Left cardiac atrium (tissue), 4 donors: ENCODE measurements at regions of chr1 and their contacts with region 1.

Region 1: GRCh38 chr1:33219881-33220661 is 36.2 kb upstream of the ZNF362 start:
- DNase-seq: no peak
- ATAC-seq: peak in 1 of 2 donors; percentile 45

Region 2: DNA sequence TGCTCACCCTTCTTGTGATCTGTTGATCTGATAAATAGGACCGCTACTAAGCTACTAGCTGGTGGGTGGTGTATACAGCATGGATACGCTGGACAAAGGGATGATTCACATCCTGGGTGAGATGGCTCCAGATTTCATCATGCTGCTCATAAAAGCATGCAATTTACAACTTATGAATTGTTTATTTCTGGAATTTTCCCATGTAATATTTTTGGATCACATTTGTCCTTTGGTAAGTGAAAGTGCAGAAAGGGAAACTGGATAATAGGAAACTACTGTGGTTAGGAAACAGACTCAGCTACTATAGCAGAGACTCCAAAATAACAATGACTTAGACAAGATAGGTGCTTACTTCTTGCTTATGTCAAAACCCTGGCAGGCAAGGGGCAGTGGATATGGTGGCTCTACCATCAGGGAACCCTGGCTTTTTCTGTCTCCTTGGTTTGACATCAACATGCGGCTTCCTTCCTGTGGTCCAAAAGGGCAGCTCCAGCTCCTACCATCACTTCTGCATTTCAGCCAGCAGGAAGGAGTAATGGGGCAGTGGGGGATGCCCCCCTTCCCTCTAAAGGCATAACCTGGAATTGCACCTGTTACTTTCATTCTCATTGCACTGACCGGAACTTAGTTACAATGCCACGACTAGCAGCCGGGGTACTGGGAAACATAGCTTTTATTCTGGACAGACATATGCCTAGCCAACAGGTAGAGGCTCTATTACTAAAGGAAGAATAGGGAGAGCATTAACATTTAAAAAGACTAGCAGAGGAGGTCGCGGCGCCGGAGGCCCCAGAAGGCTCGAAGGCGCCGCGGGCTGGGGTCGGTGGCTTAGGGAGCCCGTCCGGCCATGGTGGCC is 169.6 kb before region 1 on chr1:
- intact Hi-C with region 1: no loop called
- DNase-seq: no peak
- ATAC-seq: peak in 1 of 2 donors; percentile 46

Region 3: DNA sequence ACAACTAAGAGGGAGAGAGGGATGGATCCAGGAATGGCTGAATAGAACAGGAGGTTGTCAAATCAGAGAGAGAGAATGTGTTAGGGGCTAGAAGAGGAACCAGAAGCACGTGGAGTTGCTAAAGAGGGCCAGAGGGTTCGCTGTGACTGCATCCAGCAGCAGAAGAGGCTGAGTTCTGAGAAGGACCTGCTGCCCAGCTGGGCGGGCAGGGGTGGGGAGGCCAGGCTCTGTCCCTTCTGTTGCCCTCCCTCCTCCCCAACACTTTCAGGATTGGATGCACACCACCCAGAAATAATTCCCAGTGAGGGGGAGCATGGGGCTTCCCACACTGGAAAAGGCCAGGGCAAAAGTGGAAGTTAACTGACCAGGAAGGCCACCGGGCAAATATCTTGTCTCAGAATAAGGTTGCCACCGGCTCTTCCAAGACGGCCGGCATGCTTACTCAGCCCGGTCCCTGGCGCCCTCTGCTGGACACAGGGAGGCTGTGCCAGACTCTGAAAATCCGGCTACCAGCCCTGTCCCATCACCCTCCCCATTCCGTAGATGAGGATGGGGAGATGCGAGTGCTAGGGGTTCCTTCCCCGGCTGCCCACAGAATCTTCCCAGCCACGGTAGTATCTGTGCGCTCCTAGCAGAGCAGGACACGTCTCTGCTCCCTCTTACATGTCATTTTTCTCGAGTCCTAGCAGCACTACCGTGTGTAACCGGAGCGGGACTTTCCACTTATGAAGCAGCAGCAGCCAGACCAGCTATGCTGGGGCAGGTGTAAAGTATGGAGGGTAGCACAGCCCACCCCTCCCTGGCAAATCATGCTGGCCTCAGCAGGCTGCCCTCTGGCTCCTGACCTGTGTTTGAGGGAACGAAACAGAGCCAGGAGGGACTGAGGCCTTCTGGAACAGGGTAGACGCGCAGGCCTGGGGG is 147.7 kb after region 1 on chr1:
- intact Hi-C with region 1: loop called in 1 of 2 experiments (anchors 5 kb)
- DNase-seq: peak; percentile 90
- ATAC-seq: peak; percentile 73 to 77

Region 4: GRCh38 chr1:33460947-33461629 is 241.0 kb after region 1 on chr1:
- intact Hi-C with region 1: loop called in 1 of 2 experiments (anchors 10 kb)
- DNase-seq: peak; percentile 34
- ATAC-seq: peak; percentile 70 to 74

Region 5: DNA sequence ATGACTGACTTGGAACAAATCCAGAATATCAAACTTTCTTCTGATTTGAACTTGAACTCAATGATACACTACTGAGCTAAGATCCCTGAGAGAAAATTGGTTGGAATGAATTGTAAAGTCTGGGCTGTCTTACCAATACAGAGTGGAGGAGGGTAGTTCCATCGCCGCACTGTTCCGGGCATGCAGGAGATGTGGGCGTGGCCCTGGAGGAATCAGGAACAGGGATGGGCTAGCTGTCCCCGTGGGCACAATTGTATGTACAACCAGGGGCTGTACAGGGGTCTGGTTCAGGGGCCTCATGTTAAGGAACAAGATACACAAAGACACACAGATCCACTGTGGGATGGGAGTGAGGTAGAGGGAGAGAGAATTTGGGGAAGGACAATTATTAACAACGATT is 396.7 kb after region 1 on chr1:
- intact Hi-C with region 1: loop called in 1 of 2 experiments (anchors 10 kb)
- DNase-seq: no peak
- ATAC-seq: peak in 1 of 2 donors; percentile 38